Pancreas (tissue), 10 donors: ENCODE measurements at regions of chr2 and their contacts with region 1.

Region 1: GRCh38 chr2:41853427-41854216 is 194.2 kb upstream of the PKDCC start:
- DNase-seq: peak in 2 of 6 donors; percentile 31 to 59
- ATAC-seq: peak; percentile 56 to 75 (median 70)
- H3K4me3 ChIP-seq: no peak overlapping the region
- H3K27ac ChIP-seq: no peak overlapping the region
- H3K4me1 ChIP-seq: no peaks in the 10 kb centered on the region
- H3K27me3 ChIP-seq: no peaks in the 10 kb centered on the region
- CTCF ChIP-seq: peak; percentile 55 to 69 (median 60)

Region 2: GRCh38 chr2:42086500-42086953 is 232.9 kb after region 1 on chr2:
- intact Hi-C with region 1: loop called in 2 of 3 experiments (anchors 5 kb)
- DNase-seq: peak in 3 of 6 donors; percentile 38 to 65 (median 60)
- ATAC-seq: peak; percentile 72 to 87 (median 86)
- H3K4me3 ChIP-seq: no peak overlapping the region
- H3K27ac ChIP-seq: no peak overlapping the region
- H3K4me1 ChIP-seq: peaks cover 0 to under 1% (median 0%) of the 10 kb centered on the region in 3 donors
- H3K27me3 ChIP-seq: no peaks in the 10 kb centered on the region
- CTCF ChIP-seq: peak; percentile 34 to 62 (median 50)

Region 3: GRCh38 chr2:42339191-42339912 is 485.7 kb after region 1 on chr2:
- intact Hi-C with region 1: loop called in 1 of 3 experiments (anchors 10 kb)
- DNase-seq: no peak
- ATAC-seq: peak in 2 of 4 donors; percentile 49 to 51
- H3K4me3 ChIP-seq: no peak overlapping the region
- H3K27ac ChIP-seq: no peak overlapping the region
- H3K4me1 ChIP-seq: peaks cover 4 to 8% (median 7%) of the 10 kb centered on the region in 3 donors
- H3K27me3 ChIP-seq: no peaks in the 10 kb centered on the region
- CTCF ChIP-seq: no peak

Region 4: DNA sequence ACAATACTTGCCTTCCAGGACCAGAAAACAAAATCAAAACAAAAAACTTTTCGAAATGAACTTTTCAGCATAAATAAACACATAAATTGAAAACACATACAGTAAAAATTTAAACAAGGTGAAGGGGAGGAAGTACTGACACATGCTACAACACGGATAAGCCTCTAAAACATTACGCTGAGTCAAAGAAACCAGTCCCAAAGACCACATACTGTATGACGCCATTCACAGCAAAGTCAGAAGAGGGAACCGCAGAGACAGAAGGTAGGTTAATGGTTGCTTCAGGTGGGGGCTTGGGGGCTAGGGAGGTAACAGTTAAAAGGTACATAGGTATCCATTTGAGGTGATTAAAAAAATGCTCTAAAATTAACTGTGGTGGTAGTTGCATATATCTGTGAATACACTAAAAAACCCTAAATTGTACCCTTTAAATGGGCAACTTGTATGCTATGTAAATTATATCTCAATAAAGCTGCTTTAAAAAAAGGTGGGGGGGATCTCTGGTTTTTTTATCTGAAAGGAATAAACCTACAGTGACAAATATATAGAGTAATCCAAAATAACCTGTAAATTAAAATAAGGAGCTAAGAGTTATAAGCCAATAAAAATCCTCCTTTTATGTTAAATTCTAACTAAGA is 500.3 kb after region 1 on chr2:
- intact Hi-C with region 1: no loop called
- DNase-seq: no peak
- ATAC-seq: no peak
- H3K4me3 ChIP-seq: no peak overlapping the region
- H3K27ac ChIP-seq: no peak overlapping the region
- H3K4me1 ChIP-seq: peaks cover 0 to 8% (median 8%) of the 10 kb centered on the region in 3 donors
- H3K27me3 ChIP-seq: no peaks in the 10 kb centered on the region
- CTCF ChIP-seq: no peak